MCF 10A (cell line): ENCODE measurements at regions of chr11 and their contacts with region 1.

Region 1: DNA sequence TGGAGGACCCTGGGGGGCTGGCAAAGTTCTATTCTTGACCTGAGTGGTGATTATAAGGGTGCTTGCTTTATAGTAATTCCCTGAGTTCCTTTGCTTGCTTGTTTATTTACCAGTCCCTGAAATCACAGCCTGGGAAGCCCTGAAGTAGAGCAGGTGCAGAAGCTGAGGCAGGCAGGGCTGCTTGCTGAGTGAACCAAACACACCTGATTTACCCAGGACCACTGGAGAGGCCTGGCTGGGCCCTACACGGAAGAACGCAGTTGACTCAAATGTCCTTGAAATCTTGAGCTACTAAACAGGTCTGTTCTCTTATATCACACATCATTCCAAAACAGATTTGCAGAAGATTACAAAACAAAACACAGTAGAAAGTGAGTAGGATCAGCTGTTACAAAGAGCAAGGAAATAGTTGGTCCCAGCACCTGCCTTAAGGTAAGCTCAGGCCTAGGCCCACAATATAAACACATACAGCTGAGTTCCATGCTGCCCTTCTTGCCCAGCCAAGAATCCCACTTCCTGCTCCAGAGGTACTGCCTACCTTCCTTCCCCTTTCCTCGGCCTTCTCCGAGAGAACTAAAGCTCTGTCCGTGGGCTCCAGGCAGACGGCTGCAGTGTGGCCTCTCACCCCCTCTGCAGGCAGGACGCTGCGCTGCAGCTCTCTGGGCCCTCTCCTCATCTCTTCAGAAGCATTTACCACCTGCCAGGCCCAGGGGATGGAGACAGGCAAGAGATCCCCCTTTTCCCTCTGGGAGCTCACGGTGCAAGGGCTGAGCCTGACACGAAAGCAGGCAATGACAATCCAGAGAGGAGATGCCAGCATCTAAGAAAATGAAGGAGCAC is 46.1 kb upstream of the SCUBE2 start:
- DNase-seq: peak; percentile 77
- H3K4me3 Mint-ChIP-seq: no peak overlapping the region
- H3K27ac Mint-ChIP-seq: peak overlapping the region; percentile 2
- H3K4me1 Mint-ChIP-seq: peaks cover 34% of the 10 kb centered on the region
- H3K27me3 Mint-ChIP-seq: no peaks in the 10 kb centered on the region
- CTCF ChIP-seq: peak; percentile 95

Region 2: GRCh38 chr11:8688414-8689362 is 448.8 kb before region 1 on chr11:
- CTCF ChIA-PET with region 1: no interaction called
- POLR2A ChIA-PET with region 1: no interaction called
- intact Hi-C with region 1: loop called (anchors 10 kb)
- DNase-seq: peak; percentile 97
- H3K4me3 Mint-ChIP-seq: peak overlapping the region; percentile 75
- H3K27ac Mint-ChIP-seq: peak overlapping the region; percentile 87
- H3K4me1 Mint-ChIP-seq: peaks cover 33% of the 10 kb centered on the region
- H3K27me3 Mint-ChIP-seq: no peaks in the 10 kb centered on the region
- CTCF ChIP-seq: no peak

Region 3: GRCh38 chr11:8917157-8917825 is 220.2 kb before region 1 on chr11:
- CTCF ChIA-PET with region 1: interaction called, 17 read pairs
- POLR2A ChIA-PET with region 1: no interaction called
- intact Hi-C with region 1: loop called (anchors 2 kb)
- DNase-seq: peak; percentile 64
- H3K4me3 Mint-ChIP-seq: peak overlapping the region; percentile 49
- H3K27ac Mint-ChIP-seq: peak overlapping the region; percentile 72
- H3K4me1 Mint-ChIP-seq: peaks cover 24% of the 10 kb centered on the region
- H3K27me3 Mint-ChIP-seq: no peaks in the 10 kb centered on the region
- CTCF ChIP-seq: no peak

Region 4: DNA sequence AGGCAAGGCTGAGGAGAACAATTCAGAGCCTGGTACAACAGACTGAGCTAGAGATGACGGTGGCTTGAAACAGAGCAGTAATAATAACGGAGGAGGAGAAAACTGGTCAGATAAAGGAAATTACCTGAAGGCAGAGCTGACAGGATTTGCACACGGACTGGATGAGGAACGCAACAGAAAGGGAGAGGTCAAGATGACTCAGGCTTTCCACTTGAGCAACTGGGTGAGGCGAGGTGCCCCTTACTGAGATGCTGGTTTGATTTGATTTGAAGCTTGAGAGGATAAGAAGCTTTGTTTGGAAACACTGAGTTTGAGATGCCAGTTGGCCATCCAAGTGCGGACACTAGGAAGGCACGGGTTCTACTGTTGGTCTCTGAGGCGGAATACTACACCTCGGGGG is 98.3 kb before region 1 on chr11:
- CTCF ChIA-PET with region 1: interaction called, 6 read pairs
- POLR2A ChIA-PET with region 1: interaction called, 3 read pairs
- intact Hi-C with region 1: loop called (anchors 5 kb)
- DNase-seq: peak; percentile 74
- H3K4me3 Mint-ChIP-seq: no peak overlapping the region
- H3K27ac Mint-ChIP-seq: peak overlapping the region; percentile 4
- H3K4me1 Mint-ChIP-seq: peaks cover 11% of the 10 kb centered on the region
- H3K27me3 Mint-ChIP-seq: no peaks in the 10 kb centered on the region
- CTCF ChIP-seq: no peak

Region 5: GRCh38 chr11:9109939-9110731 is 27.4 kb before region 1 on chr11:
- CTCF ChIA-PET with region 1: interaction called, 13 read pairs
- POLR2A ChIA-PET with region 1: interaction called, 7 read pairs
- intact Hi-C with region 1: no loop called
- DNase-seq: no peak
- H3K4me3 Mint-ChIP-seq: no peak overlapping the region
- H3K27ac Mint-ChIP-seq: no peak overlapping the region
- H3K4me1 Mint-ChIP-seq: no peaks in the 10 kb centered on the region
- H3K27me3 Mint-ChIP-seq: no peaks in the 10 kb centered on the region
- CTCF ChIP-seq: no peak